ENCODE measurements at regions of chr5 and their contacts with region 1.

Region 1: GRCh38 chr5:132142459-132142858 is 68.9 kb downstream of the CSF2 start:
- DNase-seq: no peak
- H3K4me3 ChIP-seq: no peak overlapping the region
- CTCF ChIP-seq: no peak

Region 2: DNA sequence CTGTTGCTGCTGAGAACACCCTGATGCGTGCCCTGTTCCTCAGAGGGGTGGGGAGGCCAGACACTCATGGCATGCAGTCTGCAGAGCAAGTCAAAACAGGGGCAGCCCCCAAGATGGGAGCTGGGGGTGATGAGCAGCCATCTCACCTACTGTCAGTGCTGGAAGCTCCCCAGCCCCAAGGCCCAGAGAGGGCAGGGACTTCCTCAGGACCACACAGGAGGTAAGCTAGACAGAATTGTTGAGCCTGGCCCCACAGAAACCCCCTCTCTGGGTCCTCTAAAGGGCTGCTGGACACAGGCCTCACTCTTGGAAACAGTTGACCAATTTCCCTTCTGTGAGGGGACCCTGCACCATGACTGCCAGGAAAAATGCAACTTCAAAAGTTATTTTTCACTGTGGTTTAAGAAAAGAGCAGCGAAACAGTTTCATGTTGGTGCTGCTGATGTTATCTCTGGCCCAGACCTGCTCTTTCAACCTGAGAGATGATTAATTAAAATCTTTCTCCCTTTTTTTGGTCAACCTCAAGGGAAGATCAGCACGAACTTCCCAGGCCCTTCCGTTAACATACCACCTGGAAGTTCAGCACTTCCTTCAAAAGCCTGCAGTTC is 59.3 kb before region 1 on chr5:
- in situ Hi-C with region 1: loop called (anchors 5 kb)
- DNase-seq: no peak
- H3K4me3 ChIP-seq: no peak overlapping the region
- CTCF ChIP-seq: no peak

Region 3: DNA sequence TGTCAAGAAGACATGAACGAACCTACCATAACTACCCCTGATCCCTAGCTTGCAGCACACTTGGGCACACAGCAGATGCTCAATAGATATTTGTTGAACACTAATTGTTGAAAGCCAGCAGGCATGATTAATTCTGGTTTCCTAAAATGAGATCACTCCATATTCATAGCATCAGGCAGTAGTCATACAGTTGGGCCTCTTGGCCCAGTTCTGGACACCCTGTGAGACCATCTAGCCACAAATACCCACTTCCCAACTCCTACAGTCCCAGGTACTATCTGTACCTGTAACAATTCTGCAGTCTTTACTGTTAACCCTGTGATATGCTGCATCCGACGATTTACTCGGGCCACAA is 61.0 kb after region 1 on chr5:
- in situ Hi-C with region 1: no loop called
- DNase-seq: no peak
- H3K4me3 ChIP-seq: no peak overlapping the region
- CTCF ChIP-seq: no peak